ENCODE measurements at regions of chr16 and their contacts with region 1.

Region 1: DNA sequence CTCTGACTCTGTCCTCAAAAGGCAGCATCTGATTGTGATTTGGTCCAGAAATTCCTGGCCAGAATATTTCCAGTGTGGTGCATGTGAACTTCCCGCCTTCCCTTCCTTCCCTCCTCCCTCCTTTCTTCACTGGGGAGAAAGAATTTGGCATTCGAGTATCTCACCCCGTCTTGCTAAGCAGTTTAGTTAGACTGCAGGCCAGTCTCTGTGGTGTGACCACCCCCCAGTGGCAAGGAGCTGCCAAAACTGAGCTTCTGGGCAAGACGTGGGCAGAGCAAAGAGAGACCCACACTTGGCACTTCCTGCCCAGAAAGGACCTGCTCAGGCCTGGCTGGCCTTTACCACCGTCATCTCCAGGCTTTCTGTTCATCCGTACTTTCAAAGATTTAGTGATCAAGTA is 36.4 kb downstream of the SNX20 start:
- DNase-seq: no peak
- ATAC-seq: peak; percentile 65

Region 2: GRCh38 chr16:50245417-50246298 is 399.1 kb before region 1 on chr16:
- intact Hi-C with region 1: loop called (anchors 10 kb)
- DNase-seq: no peak
- ATAC-seq: peak; percentile 81

Region 3: DNA sequence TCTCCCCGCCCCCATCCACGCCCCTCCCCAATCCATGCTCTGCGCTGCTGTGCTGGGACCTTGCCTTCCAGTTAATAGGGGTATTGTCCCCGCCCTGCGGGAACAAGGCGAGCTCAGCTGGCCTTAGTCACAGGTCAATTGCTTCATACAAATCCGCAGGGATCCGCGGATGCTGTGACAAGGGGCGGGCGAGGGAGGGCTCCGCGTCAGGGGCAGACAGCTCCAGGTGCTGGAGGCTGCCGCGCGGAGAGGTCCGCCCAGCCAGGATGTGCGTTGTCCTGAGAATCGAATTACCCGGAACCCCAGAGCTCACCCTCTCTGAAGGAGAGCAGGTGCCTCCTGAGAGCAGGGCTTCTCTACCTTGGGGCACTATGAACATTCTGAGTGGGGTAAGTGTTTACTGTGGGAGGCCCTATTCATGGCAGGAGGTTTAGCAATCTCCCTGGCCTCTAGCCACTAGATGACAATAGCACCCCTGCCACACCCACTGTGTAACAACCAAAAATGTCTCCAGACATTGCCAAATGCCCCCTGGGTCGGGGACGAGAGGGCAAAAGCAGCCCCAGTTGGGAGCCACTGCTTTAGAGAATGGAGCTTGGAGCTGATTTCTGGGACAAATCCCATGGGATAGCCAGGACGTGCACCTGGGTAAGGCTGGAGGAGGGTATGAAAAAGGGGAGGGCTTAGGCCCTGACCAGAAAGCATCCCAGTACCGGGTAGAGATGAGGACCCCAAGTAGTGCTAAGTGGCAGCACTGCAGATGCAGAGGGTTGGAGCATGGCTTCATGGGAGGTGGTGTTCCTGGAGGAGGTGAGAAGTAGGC is 235.4 kb after region 1 on chr16:
- intact Hi-C with region 1: no loop called
- DNase-seq: no peak
- ATAC-seq: no peak